Left colon (tissue), 2 donors: ENCODE measurements at regions of chr5 and their contacts with region 1.

Region 1: DNA sequence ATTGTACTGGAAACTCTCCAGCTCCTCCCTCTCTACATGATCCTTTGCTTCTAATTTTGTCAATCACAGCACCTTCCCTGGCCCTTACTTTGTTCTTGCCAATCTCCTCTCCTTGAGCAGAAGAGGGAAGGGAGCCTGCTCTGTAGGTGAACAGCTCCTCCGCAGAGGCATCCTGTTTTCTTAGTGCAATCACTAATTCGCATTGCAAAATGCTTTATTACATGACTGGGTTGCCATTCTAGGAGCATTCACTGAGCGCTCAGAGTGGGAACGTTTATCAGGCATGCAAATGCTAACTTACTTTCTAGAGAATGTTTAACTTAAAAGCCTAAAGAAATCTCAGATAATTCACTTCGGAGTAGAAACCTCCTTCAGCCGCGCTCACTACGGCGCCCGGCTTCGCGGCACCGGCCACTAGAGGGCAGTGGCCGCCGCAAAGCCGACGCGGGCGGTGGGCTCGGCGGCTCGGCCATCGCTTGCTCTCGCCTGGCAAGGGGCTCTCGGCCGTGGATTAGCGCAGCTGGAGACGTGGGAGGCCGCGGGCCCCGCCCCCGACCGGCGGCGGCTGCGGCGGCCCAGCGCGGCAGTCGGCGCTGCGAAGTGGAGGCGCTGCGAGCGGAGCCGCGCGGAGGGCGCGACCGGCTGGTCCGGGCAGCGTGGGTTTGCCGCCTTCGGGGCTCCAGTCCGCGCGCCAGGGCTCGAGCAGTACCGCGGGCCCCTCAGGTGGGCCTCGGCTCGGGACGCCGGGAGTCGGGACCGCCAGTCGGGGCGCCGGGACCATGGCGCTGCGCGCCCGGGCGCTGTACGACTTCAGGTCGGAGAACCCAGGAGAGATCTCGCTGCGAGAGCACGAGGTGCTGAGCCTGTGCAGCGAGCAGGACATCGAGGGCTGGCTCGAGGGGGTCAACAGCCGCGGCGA is at the start of gene SNX18:
- DNase-seq: peak; percentile 91 to 92
- ATAC-seq: peak; percentile 96
- total RNA-seq, gene SNX18: 10.6 to 16.8 TPM

Region 2: GRCh38 chr5:54404568-54404967 is 112.9 kb before region 1 on chr5:
- intact Hi-C with region 1: no loop called
- DNase-seq: no peak
- ATAC-seq: no peak

Region 3: DNA sequence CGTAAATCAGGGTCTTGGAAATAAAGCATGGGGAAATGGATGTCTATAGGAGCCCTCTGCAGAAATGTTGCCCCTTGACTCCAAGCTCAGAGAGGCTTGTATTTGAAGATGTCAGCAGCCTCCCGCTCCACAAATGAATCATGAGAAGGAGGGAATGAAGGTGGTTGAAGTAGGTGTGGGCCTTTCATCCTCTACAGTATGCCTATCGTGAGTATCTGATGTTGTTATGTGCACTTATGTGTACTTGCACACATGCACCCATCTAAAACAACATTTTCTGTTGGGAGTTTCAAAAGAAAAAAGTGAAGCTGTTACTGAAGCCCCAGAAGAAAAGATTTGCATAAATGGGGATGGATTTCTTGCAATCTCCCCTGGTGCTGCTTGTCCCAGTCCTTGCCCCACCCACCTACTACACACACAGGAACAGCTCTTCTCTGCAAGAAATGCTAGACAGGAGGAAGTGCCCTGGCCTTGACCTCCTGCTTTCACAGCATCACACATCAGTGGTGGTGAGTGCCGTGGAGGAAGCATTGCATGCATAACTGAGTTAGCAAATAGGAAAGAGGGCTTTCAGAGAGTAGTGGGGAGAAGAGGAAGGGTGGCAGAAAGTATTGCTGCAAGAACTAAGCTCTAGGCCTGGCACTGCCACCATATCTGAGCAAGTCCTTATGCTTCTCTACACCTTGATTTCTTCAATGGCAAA is 156.2 kb after region 1 on chr5:
- intact Hi-C with region 1: no loop called
- DNase-seq: peak; percentile 36 to 63
- ATAC-seq: peak; percentile 36

Region 4: DNA sequence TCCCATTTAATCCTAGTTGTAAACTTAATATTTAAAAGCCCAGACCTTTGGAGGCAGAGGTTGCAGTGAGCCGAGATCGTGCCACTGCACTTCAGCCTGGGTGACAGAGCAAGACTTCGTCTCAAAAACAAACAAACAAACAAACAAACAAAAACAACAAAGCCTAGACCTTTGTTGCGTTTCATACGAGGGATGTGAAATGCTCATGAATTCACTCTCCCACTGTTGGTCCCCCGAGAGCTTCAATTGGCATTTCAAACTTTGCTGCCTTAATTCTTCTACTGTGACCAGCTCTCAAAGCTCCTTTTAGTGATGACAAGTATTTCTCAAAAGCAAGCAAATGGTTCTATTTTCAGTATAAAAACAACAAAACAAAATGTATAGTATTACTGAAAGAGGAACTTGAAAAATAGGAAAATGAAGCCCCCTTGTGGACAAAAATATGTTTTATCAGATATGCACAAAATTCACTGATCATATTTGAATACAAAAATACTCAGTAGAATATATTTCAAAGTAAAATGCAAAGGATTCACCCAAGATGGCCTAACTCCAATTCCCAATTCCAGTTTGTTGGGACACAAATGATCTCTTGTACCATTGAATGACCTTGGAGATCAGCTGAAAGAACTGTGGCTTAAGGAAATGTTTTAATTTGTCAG is 327.6 kb after region 1 on chr5:
- intact Hi-C with region 1: loop called (anchors 2 to 10 kb)
- DNase-seq: no peak
- ATAC-seq: peak; percentile 27